ENCODE measurements at regions of chr11 and their contacts with region 1.

Region 1: DNA sequence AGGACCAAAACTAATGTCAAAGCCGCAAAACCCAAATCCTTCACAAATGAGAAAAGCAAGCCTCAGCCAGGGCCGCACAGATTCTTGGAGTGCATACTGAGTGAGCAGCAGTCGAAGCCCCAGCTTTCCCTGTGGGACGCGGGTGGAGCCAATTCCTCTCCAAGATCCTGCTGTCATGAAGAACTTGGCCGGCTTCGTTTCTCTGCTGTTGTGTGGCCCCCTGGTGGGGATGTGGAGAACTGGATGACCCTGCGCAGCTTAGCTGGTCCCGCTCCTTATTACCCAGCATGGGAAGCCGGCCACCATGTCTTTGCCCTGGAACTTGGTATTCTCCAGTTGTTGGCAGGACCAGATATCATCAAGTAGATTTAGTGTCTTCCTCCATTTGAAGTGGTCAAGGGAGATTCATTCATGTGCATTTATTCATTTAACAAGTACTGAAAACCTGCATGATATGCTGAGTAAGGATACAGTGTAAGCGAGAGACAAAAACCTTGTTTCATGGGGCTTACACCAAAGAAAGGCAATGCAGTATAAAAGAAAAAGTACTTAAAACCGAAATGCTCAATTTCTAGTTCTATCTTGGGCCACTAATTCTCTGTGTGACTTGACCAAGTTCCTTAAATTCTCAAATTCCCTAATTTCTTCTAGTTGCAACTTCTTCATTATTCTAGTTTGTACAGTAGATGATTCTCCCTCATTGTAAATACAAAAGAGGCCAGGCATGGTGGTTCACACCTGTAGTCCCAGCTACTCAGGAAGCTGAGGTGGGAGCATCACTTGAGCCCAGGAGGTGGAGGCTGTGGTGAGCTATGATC is 56.7 kb upstream of the CRTAM start:
- DNase-seq: peak; percentile 47 to 89
- H3K4me3 ChIP-seq: no peak overlapping the region
- H3K27ac ChIP-seq: no peak overlapping the region
- H3K4me1 ChIP-seq: peaks cover 0 to 18% of the 10 kb centered on the region in 2 donors
- H3K27me3 ChIP-seq: no peaks in the 10 kb centered on the region
- CTCF ChIP-seq: peak; percentile 84 to 89 (median 87)

Region 2: DNA sequence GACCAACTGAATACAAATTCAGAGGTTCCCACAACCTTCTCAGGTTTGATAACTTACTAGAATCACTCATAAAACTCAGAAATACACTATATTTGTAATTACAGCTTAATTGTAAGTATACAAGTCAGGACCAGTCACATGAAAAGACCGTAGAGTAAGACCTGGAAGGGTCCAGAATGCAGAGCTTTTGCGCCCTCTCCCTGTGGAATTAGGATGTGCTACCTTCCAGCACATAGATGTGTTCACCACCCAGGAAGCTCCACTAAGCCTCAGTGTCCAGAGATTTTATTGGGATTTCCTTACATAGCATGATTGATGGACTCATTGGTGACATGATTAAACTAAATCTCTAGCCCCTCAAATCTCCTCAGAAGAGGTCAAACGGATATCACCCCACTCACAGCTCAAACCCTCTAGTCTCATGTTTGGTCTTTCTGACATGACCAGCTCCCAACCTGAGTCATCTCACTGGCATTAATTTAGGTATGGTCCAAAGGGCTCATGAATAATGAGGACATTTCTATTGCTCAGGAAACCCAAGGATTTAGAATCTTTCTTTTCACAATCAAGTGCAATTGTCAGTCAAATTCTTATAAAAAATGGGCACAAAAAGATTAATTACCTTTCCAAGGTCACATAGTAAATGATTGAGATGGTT is 203.3 kb before region 1 on chr11:
- intact Hi-C with region 1: loop called (anchors 1 kb)
- DNase-seq: no peak
- H3K4me3 ChIP-seq: no peak overlapping the region
- H3K27ac ChIP-seq: no peak overlapping the region
- H3K4me1 ChIP-seq: no peaks in the 10 kb centered on the region
- H3K27me3 ChIP-seq: no peaks in the 10 kb centered on the region
- CTCF ChIP-seq: no peak

Region 3: GRCh38 chr11:122628810-122629555 is 152.6 kb before region 1 on chr11:
- intact Hi-C with region 1: loop called (anchors 1 kb)
- DNase-seq: peak in 1 of 2 donors; percentile 77
- H3K4me3 ChIP-seq: no peak overlapping the region
- H3K27ac ChIP-seq: no peak overlapping the region
- H3K4me1 ChIP-seq: peaks cover 0 to 3% of the 10 kb centered on the region in 2 donors
- H3K27me3 ChIP-seq: no peaks in the 10 kb centered on the region
- CTCF ChIP-seq: peak; percentile 70 to 76 (median 71)

Region 4: GRCh38 chr11:122910775-122911174 is 129.2 kb after region 1 on chr11:
- intact Hi-C with region 1: no loop called
- DNase-seq: no peak
- H3K4me3 ChIP-seq: no peak overlapping the region
- H3K27ac ChIP-seq: no peak overlapping the region
- H3K4me1 ChIP-seq: no peaks in the 10 kb centered on the region
- H3K27me3 ChIP-seq: no peaks in the 10 kb centered on the region
- CTCF ChIP-seq: peak in 1 of 3 experiments; percentile 27